H1 (cell line): ENCODE measurements at regions of chr22 and their contacts with region 1.

Region 1: DNA sequence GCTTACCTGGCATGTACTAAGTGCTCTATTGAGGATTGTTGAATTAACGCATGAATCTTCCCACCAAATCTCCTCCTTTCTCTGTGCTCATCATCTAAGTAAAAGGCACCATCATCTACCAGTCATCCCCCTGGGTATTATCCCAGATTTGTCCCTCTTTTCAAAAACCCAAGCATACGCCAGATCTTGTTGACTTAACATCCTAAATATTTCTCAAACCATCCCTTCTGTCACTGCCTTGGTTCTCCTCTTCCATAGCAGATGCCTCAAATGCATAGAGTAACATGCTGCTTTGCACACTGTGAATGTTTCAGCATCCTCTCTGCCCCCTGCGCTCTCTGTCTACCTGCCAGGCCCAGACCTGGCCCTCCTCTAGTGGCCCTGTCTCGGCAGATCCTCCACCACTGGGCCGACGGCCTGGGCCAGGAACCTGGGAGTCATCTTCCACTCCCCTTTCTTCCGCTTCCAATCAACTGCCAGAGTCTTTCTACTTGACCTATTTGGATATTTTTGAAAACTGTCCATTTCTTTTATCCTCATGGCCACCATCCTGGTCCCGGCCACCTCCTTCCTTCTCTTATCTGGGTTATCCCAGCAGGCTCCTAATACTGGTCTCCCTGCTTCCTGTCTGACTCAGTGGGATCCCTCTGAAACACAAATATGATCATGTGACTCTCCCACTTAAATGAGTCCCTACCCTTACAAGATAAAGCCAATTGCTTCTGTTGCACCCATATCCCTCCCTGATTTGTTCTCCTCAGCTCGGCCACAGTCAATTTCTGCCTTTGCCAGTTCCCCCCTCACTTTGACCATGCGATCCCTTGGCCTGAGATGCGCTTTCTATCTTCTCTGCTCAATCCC is 3.4 kb upstream of the TAB1 start:
- DNase-seq: no peak
- H3K4me3 ChIP-seq: no peak overlapping the region
- H3K27ac ChIP-seq: no peak overlapping the region
- H3K4me1 ChIP-seq: peaks cover 0 to 3% (median under 1%) of the 10 kb centered on the region in 4 experiments; a peak in 1 of 7 replicates
- H3K27me3 ChIP-seq: no peaks in the 10 kb centered on the region
- CTCF ChIP-seq: no peak
- EP300 ChIP-seq: no peak
- POLR2A ChIP-seq: no peak
- RAD21 ChIP-seq: no peak

Region 2: DNA sequence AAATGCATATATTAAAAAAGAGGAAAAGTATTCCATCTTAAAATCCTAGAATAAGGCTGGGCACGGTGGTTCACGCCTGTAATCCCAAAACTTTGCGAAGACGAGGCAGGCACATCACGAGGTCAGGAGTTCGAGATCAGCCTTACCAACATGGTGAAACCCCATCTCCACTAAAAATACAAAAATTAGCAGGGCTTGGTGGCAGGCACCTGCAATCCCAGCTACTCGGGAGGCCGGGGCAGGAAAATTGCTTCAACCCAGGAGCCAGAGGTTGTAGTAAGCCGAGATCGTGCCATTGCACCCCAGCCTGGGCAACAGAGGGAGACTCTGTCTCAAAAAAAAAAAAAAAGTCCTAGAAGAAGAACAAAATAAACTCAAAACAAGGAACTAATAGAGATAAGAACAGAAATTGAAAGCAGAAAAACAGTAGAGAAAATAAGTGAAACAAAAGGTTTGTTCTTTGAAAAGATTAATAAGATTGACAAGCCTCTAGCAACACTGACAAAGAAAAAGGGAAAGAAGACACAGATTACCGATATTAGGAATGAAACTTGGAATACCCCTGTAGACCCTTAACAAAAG is 198.7 kb before region 1 on chr22:
- CTCF ChIA-PET with region 1: no interaction called
- POLR2A ChIA-PET with region 1: no interaction called
- DNase-seq: peak in 1 of 2 experiments; percentile 22
- H3K4me3 ChIP-seq: no peak overlapping the region
- H3K27ac ChIP-seq: no peak overlapping the region
- H3K4me1 ChIP-seq: no peaks in the 10 kb centered on the region; a peak in 1 of 7 replicates
- H3K27me3 ChIP-seq: no peaks in the 10 kb centered on the region
- CTCF ChIP-seq: no peak
- EP300 ChIP-seq: no peak
- POLR2A ChIP-seq: no peak
- RAD21 ChIP-seq: no peak

Region 3: GRCh38 chr22:39471381-39472141 is 75.4 kb after region 1 on chr22:
- CTCF ChIA-PET with region 1: interaction called, 11 read pairs
- POLR2A ChIA-PET with region 1: interaction called, 3 read pairs
- DNase-seq: no peak
- H3K4me3 ChIP-seq: no peak overlapping the region; a peak in 1 of 8 replicates
- H3K27ac ChIP-seq: no peak overlapping the region
- H3K4me1 ChIP-seq: peaks cover 16 to 51% (median 39%) of the 10 kb centered on the region in 4 experiments
- H3K27me3 ChIP-seq: no peaks in the 10 kb centered on the region
- CTCF ChIP-seq: no peak
- EP300 ChIP-seq: no peak
- POLR2A ChIP-seq: no peak
- RAD21 ChIP-seq: no peak

Region 4: GRCh38 chr22:39532215-39533071 is 136.3 kb after region 1 on chr22 and contains the start of gene RPS19BP1:
- CTCF ChIA-PET with region 1: no interaction called
- POLR2A ChIA-PET with region 1: no interaction called
- DNase-seq: peak; percentile 94 to 100
- H3K4me3 ChIP-seq: peak within 1 kb of the TSS; percentile 73 to 97 (median 96)
- H3K27ac ChIP-seq: peak within 1 kb of the TSS; percentile 67
- H3K4me1 ChIP-seq: peaks cover 12 to 45% (median 25%) of the 10 kb centered on the region in 4 experiments
- H3K27me3 ChIP-seq: no peaks in the 10 kb centered on the region
- CTCF ChIP-seq: no peak
- EP300 ChIP-seq: 0 out of 3 replicates have a peak, but pooled peaks of 1 of the 2 experiments have one; percentile 20
- POLR2A ChIP-seq: peak in 1 of 2 experiments; percentile 77; a peak in 2 of 3 replicates
- RAD21 ChIP-seq: no peak
- total RNA-seq, gene RPS19BP1: 77.5 and 77.9 TPM in 2 replicates